CD4-positive, alpha-beta memory T cell (primary cell): ENCODE measurements at regions of chr19 and their contacts with region 1.

Region 1: DNA sequence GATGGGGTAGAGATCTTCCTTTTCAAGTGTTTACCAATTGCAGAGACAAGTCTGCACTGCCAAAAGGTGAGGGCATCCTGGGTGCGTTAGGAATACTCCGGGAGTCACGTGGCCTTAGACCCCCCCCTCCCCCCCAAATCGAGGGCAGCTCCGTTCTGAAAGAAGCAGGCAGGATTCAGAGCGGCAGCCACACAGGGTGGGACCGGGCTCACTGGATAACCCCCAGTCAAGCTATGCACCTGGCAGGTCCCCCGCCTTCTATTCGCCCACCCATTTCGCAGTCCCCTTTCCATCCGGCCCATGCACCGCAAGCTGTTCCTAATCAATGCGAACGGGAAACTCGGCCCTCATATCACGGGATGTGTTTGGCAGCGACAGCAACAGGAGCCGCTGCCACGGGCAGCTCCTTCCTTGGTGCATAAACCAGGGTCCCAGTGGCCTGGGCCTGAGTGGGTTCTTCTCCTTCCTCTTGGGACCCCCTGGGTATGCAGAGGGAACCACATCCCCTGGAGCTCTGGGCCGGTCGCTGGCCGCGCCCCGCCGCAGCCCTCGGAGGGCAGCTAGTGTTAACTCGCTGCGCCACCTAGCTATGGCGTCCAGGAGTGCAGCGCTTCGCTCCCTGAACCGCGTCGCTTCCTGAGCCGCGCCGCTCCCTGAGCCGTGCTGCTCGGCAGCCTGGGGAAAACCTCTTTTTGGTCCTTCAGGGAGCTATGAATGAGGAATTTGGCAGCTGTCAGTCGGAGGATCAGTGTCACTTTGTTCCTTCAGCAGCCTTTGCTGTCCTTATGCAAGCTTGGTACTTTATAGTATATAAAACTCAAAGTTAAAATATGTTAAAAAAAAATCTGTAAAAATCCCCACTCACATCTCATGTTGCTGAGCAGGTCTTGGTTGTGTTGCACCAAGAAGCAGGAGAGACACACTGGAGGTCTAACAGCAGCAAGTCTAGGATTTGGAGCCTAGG is 41.4 kb downstream of the LYL1 start:
- DNase-seq: peak; percentile 63 to 68 (median 64)
- H3K4me3 ChIP-seq: peak overlapping the region; percentile 25 to 64
- H3K4me3 Mint-ChIP-seq: peak overlapping the region; percentile 76 to 88 (median 84)
- H3K27ac ChIP-seq: no peak overlapping the region
- H3K27ac Mint-ChIP-seq: peak overlapping the region in 2 of 7 donors; percentile 27 to 29
- H3K4me1 ChIP-seq: peaks cover 15% of the 10 kb centered on the region
- H3K4me1 Mint-ChIP-seq: peaks cover 3 to 10% (median 6%) of the 10 kb centered on the region in 4 donors
- H3K27me3 ChIP-seq: peaks cover 11% of the 10 kb centered on the region
- H3K27me3 Mint-ChIP-seq: peaks cover 1 to 17% of the 10 kb centered on the region in 2 donors

Region 2: GRCh38 chr19:13033819-13034611 is 27.2 kb before region 1 on chr19:
- CTCF ChIA-PET with region 1: interaction called, 29 read pairs
- POLR2A ChIA-PET with region 1: no interaction called
- intact Hi-C with region 1: no loop called
- DNase-seq: peak in 1 of 5 donors; percentile 25
- H3K4me3 ChIP-seq: no peak overlapping the region
- H3K4me3 Mint-ChIP-seq: no peak overlapping the region
- H3K27ac ChIP-seq: no peak overlapping the region
- H3K27ac Mint-ChIP-seq: no peak overlapping the region
- H3K4me1 ChIP-seq: no peaks in the 10 kb centered on the region
- H3K4me1 Mint-ChIP-seq: peaks cover 0 to 1% (median 0%) of the 10 kb centered on the region in 4 donors
- H3K27me3 ChIP-seq: no peaks in the 10 kb centered on the region
- H3K27me3 Mint-ChIP-seq: peaks cover 0 to 9% of the 10 kb centered on the region in 2 donors

Region 3: DNA sequence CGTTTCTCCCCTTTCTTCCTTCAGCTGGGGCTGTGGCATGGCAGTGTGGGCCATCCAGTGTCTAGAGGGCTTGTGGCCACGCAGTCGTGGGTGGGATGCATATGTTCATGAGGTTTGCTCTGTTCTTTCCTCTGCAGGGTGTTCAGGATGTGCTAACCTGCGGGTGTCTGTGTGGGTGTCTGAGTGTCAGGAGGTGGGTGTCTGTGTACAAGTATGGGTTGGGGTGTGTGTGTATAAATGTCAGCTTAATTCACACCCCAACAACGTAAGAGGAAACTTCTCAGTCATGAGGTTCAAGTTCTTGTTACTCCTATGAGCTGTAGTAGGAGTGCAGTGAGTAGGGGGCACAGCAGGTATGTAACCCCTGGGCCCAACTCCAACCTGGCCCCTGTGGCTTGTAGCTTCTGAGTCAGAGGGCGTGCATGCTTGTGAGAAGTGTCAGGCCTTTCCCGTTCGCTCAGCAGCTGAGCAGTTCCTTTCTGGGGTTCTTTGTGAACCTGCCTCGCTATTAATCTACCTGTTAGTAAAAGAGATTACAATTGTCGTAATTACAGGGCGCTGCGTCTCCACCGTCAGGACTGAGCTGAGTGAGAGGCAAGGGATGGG is 16.9 kb before region 1 on chr19:
- CTCF ChIA-PET with region 1: interaction called, 30 read pairs
- POLR2A ChIA-PET with region 1: no interaction called
- intact Hi-C with region 1: no loop called
- DNase-seq: peak in 2 of 5 donors; percentile 14 to 26
- H3K4me3 ChIP-seq: no peak overlapping the region
- H3K4me3 Mint-ChIP-seq: no peak overlapping the region
- H3K27ac ChIP-seq: no peak overlapping the region
- H3K27ac Mint-ChIP-seq: peak overlapping the region in 4 of 7 donors; percentile 1 to 51 (median 26)
- H3K4me1 ChIP-seq: no peaks in the 10 kb centered on the region
- H3K4me1 Mint-ChIP-seq: peaks cover 2 to 10% (median 4%) of the 10 kb centered on the region in 4 donors
- H3K27me3 ChIP-seq: no peaks in the 10 kb centered on the region
- H3K27me3 Mint-ChIP-seq: peaks cover 2 to 4% of the 10 kb centered on the region in 2 donors

Region 4: GRCh38 chr19:13079542-13079986 is 18.3 kb after region 1 on chr19:
- CTCF ChIA-PET with region 1: interaction called, 11 read pairs
- POLR2A ChIA-PET with region 1: no interaction called
- intact Hi-C with region 1: no loop called
- DNase-seq: no peak
- H3K4me3 ChIP-seq: no peak overlapping the region
- H3K4me3 Mint-ChIP-seq: no peak overlapping the region
- H3K27ac ChIP-seq: no peak overlapping the region
- H3K27ac Mint-ChIP-seq: peak overlapping the region in 1 of 7 donors; percentile 22
- H3K4me1 ChIP-seq: peaks cover 8% of the 10 kb centered on the region
- H3K4me1 Mint-ChIP-seq: no peaks in the 10 kb centered on the region
- H3K27me3 ChIP-seq: no peaks in the 10 kb centered on the region
- H3K27me3 Mint-ChIP-seq: no peaks in the 10 kb centered on the region

Region 5: GRCh38 chr19:13093407-13094105 is 32.3 kb after region 1 on chr19:
- CTCF ChIA-PET with region 1: interaction called, 51 read pairs
- POLR2A ChIA-PET with region 1: interaction called, 4 read pairs
- intact Hi-C with region 1: loop called (anchors 1 kb)
- DNase-seq: peak; percentile 76 to 82 (median 78)
- H3K4me3 ChIP-seq: no peak overlapping the region
- H3K4me3 Mint-ChIP-seq: peak overlapping the region in 2 of 8 donors; percentile 33 to 64
- H3K27ac ChIP-seq: no peak overlapping the region
- H3K27ac Mint-ChIP-seq: peak overlapping the region in 4 of 7 donors; percentile 24 to 68 (median 36)
- H3K4me1 ChIP-seq: peaks cover 38% of the 10 kb centered on the region
- H3K4me1 Mint-ChIP-seq: peaks cover 11 to 37% (median 18%) of the 10 kb centered on the region in 4 donors
- H3K27me3 ChIP-seq: peaks cover 15% of the 10 kb centered on the region
- H3K27me3 Mint-ChIP-seq: peaks cover 5 to 9% of the 10 kb centered on the region in 2 donors

Region 6: DNA sequence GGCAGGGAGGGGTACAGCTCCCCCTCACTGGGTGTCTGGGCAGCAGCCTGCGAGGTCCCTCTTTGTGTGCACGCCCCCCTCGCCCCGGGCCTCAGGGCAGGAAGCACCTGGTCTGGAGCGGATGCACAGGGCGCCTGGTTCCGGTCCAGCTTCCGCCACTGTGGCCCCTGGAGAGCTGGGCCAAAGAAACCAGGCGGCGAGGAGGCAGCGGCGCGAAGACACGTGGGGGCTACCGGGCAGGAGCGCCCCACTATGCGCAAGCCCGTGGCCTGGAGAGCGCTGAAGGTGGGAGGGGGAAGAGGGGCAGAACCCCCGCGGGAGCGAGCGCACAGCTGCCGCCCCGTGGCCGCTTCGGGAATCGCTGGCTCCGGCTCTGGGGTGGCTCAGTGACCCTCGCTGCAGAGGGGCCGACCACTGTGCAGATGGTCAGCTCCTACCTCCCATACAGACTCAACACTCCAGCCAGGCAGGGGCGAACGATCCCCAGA is 43.2 kb after region 1 on chr19:
- CTCF ChIA-PET with region 1: interaction called, 13 read pairs
- POLR2A ChIA-PET with region 1: interaction called, 3 read pairs
- intact Hi-C with region 1: no loop called
- DNase-seq: peak; percentile 50 to 74 (median 60)
- H3K4me3 ChIP-seq: peak overlapping the region; percentile 65 to 73
- H3K4me3 Mint-ChIP-seq: peak overlapping the region; percentile 87 to 97 (median 92)
- H3K27ac ChIP-seq: peak overlapping the region; percentile 48
- H3K27ac Mint-ChIP-seq: peak overlapping the region; percentile 83 to 94 (median 93)
- H3K4me1 ChIP-seq: peaks cover 63% of the 10 kb centered on the region
- H3K4me1 Mint-ChIP-seq: peaks cover 18 to 49% (median 32%) of the 10 kb centered on the region in 4 donors
- H3K27me3 ChIP-seq: no peaks in the 10 kb centered on the region
- H3K27me3 Mint-ChIP-seq: no peaks in the 10 kb centered on the region

Region 7: GRCh38 chr19:13162518-13163314 is 101.5 kb after region 1 on chr19:
- CTCF ChIA-PET with region 1: no interaction called
- POLR2A ChIA-PET with region 1: no interaction called
- intact Hi-C with region 1: no loop called
- DNase-seq: peak; percentile 69 to 89 (median 72)
- H3K4me3 ChIP-seq: peak overlapping the region; percentile 58 to 91
- H3K4me3 Mint-ChIP-seq: peak overlapping the region; percentile 83 to 91 (median 88)
- H3K27ac ChIP-seq: peak overlapping the region; percentile 82
- H3K27ac Mint-ChIP-seq: peak overlapping the region; percentile 94 to 99 (median 97)
- H3K4me1 ChIP-seq: peaks cover 96% of the 10 kb centered on the region
- H3K4me1 Mint-ChIP-seq: peaks cover 42 to 85% (median 63%) of the 10 kb centered on the region in 4 donors
- H3K27me3 ChIP-seq: no peaks in the 10 kb centered on the region
- H3K27me3 Mint-ChIP-seq: no peaks in the 10 kb centered on the region